Activated CD4-positive, alpha-beta memory T cell treated with anti-CD3 and anti-CD28 coated beads, Interleukin-2, amount 10 ng/mL, durations not matched to agents 7 days and 5 days (primary cell): ENCODE measurements at regions of chr1 and their contacts with region 1.

Region 1: GRCh38 chr1:182839209-182840065 is at the start of gene DHX9:
- DNase-seq: peak; percentile 95
- H3K4me3 Mint-ChIP-seq: peak within 1 kb of the TSS; percentile 96
- H3K27ac Mint-ChIP-seq: peak within 1 kb of the TSS; percentile 96
- H3K4me1 Mint-ChIP-seq: peaks cover 44% of the 10 kb centered on the region
- H3K27me3 Mint-ChIP-seq: no peaks in the 10 kb centered on the region
- total RNA-seq, gene DHX9: 163 to 171 TPM

Region 2: DNA sequence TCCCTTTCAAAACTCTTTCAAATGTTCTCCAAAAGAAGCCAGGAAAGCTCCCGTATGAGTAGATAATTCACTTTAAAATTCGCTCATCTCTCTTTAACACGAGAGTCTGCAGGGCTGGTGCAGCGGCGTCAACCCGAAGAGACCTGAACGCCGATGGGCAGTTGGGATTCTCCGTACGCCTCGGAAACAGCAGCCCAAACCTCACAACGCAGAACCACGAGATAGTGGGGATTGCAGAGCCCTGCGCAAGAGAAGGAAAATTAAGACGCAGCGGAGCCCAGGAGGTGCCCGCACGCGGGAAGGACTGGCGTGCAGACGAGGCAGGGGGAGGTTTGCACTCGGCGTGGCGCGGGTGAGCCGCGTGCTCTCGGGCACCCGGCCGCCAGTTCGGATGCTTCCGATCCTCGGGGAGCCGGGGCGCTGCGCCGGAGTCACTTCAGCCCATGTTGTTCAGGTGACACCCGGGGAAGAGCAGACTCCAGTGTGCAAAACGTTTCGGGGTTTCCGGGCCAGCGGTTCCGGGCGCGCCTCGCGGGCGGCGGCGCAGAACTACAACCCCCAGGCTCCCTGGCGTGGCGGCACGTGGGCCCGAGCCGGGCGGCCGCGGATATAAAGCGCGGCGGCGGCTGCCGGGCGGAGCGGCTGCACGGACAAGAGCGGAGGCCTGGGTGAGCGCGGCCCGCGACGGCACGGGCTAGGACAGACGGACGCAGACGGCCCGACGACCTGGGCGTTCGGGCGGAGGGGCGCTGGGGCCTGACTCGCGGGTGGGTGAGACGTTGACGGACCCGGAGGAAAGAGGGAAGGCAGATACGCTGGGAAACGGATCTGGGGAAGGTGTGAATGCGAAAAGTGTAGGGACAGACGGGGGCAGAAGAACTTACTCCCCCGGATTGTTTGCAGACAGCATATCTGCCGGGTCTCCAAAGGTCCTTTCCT is 50.0 kb before region 1 on chr1 and contains the start of gene NPL:
- CTCF ChIA-PET with region 1: interaction called, 11 read pairs
- POLR2A ChIA-PET with region 1: interaction called, 11 read pairs
- DNase-seq: peak; percentile 88
- H3K4me3 Mint-ChIP-seq: peak within 1 kb of the TSS; percentile 78
- H3K27ac Mint-ChIP-seq: peak within 1 kb of the TSS; percentile 47
- H3K4me1 Mint-ChIP-seq: peaks cover 15% of the 10 kb centered on the region
- H3K27me3 Mint-ChIP-seq: peaks cover 25% of the 10 kb centered on the region
- total RNA-seq, gene NPL: 3.7 to 5.0 TPM

Region 3: GRCh38 chr1:182889997-182890396 is 50.6 kb after region 1 on chr1:
- CTCF ChIA-PET with region 1: no interaction called
- POLR2A ChIA-PET with region 1: interaction called, 10 read pairs
- DNase-seq: peak; percentile 56
- H3K4me3 Mint-ChIP-seq: no peak overlapping the region
- H3K27ac Mint-ChIP-seq: peak overlapping the region; percentile 40
- H3K4me1 Mint-ChIP-seq: peaks cover 27% of the 10 kb centered on the region
- H3K27me3 Mint-ChIP-seq: peaks cover 8% of the 10 kb centered on the region